CD4-positive, alpha-beta T cell (primary cell): ENCODE measurements at regions of chr16 and their contacts with region 1.

Region 1: DNA sequence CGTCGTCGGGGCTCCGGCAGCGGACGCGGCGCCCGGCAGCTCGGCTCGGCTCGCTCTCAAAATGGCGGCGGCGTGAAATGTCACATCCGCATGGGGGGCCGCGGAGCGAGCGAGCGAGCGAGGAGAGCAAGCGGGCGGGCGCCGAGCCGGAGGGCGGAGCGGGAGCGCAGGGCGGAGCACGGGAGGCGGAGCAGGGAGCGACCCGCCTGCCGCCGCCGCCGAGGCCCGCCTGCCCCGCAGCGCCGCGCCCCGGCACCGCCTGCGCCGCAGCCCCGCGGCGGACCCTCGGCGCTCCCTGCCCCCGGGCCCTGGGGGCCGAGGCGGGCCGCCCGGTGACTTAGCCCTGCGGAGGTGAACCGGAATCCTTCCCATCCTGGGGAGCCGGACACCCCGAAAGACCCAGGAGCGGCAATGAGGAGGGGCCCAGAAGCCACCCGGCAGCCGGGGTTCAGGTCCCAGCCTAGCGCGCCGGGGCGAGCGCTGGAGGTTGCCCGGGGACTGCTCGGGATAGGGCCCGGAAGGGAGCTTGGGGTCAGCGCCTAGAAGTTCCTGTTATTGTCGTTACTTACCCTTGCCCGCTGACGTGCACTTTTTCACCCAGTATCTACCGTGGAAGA is at the start of gene USP7:
- DNase-seq: peak; percentile 85 to 97 (median 91)
- ATAC-seq: peak; percentile 88
- H3K4me3 ChIP-seq: peak within 1 kb of the TSS; percentile 75
- H3K4me3 Mint-ChIP-seq: peak within 1 kb of the TSS; percentile 97
- H3K27ac ChIP-seq: peak within 1 kb of the TSS; percentile 64 to 81
- H3K27ac Mint-ChIP-seq: peak within 1 kb of the TSS; percentile 94
- H3K4me1 ChIP-seq: peaks cover 42% of the 10 kb centered on the region
- H3K4me1 Mint-ChIP-seq: peaks cover 47% of the 10 kb centered on the region
- H3K27me3 ChIP-seq: no peaks in the 10 kb centered on the region
- H3K27me3 Mint-ChIP-seq: no peaks in the 10 kb centered on the region
- CTCF ChIP-seq: no peak
- total RNA-seq, gene USP7: 259 to 268 TPM

Region 2: DNA sequence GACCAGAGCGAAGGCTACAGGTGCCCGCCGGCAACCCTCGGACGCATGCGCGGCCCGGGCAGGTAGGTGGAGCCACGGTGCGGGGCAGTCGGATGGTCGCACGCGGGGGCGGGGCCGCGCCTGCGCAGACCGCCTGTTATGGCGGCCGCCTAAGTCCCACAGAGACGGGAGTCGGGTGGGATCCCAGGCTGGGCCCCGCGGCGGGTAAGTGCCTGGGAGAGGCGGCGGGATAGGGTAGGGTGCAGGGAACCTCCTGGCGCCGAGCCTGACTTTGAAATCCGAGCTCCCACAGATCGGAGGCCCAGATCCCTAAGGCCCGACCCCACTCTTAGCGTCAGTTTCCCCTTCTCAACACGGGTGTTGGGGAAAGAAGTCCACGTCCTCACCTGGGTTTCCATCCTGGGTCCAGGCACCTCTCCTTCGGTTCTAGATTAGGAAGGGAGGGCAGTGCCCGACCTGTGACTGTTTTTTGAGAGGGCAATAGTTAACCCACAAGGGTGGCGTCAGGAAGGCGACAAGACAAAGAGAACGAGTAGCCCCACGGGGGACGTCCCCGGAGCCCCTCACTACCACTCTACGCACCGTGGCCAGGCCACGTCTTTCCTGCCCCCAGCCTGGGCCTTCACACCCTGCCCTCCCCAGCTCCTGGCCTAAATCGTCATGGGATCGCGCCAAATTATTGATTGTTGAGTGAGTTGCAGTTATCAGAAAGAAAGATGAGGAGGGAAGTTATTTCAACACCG is 342.2 kb before region 1 on chr16 and contains the start of gene METTL22:
- CTCF ChIA-PET with region 1: no interaction called
- POLR2A ChIA-PET with region 1: no interaction called
- intact Hi-C with region 1: loop called in 1 of 2 experiments (anchors 2 kb)
- DNase-seq: peak; percentile 83 to 97 (median 90)
- ATAC-seq: peak; percentile 98
- H3K4me3 ChIP-seq: peak within 1 kb of the TSS; percentile 100
- H3K4me3 Mint-ChIP-seq: peak within 1 kb of the TSS; percentile 94
- H3K27ac ChIP-seq: peak within 1 kb of the TSS; percentile 33 to 72
- H3K27ac Mint-ChIP-seq: peak within 1 kb of the TSS; percentile 84
- H3K4me1 ChIP-seq: peaks cover 20% of the 10 kb centered on the region
- H3K4me1 Mint-ChIP-seq: peaks cover 22% of the 10 kb centered on the region
- H3K27me3 ChIP-seq: no peaks in the 10 kb centered on the region
- H3K27me3 Mint-ChIP-seq: peaks cover 10% of the 10 kb centered on the region
- CTCF ChIP-seq: no peak
- total RNA-seq, gene METTL22: 23.2 to 26.5 TPM

Region 3: DNA sequence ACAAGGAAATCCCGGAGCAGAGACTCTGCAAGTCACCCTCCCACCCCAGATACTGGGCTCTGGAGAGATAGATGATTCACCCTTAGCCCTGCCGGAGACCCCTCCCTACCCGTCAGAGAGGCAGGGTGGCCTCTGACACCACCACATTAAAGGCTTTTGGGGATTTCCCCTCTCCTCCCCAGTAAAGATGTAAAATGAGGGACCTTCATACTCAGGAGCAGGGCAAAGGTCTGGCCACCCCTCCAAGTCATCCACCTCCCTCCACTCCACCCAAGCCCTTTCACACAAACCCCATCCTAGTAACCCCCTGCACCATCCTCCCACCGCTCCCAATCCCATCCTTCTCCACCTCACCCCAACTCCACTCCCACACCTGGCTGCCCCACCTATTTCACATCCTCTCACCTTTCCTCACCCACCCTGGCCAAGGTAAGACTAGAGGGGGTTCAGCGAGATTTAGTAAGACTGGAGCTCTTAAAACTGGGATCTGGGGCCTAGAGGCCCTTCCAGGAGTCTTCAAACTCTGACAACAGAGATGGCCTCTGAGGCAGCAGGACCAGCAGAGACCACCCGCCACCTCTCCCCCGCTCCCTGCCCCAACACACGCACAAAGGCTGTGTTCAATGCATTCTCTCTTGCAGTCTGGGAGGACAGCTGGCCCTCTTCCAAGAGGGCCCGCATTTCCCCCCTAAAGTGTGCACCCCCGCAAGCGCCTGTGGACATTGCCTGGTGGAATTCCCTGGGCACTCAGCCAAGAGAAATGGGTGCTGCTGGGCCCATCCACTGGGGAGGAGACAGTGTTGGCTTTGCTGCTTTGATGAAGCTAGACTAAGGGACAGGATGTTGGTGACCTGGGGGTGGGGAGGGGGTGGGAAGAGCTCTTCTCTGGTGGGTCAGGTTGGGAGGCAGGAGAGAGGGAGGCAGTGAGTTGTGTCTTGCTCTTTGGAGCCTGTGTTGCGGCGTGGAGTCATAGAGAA is 288.5 kb before region 1 on chr16:
- CTCF ChIA-PET with region 1: no interaction called
- POLR2A ChIA-PET with region 1: no interaction called
- intact Hi-C with region 1: no loop called
- DNase-seq: peak; percentile 14 to 86 (median 36)
- ATAC-seq: peak; percentile 33
- H3K4me3 ChIP-seq: peak overlapping the region; percentile 92
- H3K4me3 Mint-ChIP-seq: peak overlapping the region; percentile 97
- H3K27ac ChIP-seq: no peak overlapping the region
- H3K27ac Mint-ChIP-seq: peak overlapping the region; percentile 91
- H3K4me1 ChIP-seq: peaks cover 25% of the 10 kb centered on the region
- H3K4me1 Mint-ChIP-seq: peaks cover 24% of the 10 kb centered on the region
- H3K27me3 ChIP-seq: no peaks in the 10 kb centered on the region
- H3K27me3 Mint-ChIP-seq: no peaks in the 10 kb centered on the region
- CTCF ChIP-seq: no peak

Region 4: DNA sequence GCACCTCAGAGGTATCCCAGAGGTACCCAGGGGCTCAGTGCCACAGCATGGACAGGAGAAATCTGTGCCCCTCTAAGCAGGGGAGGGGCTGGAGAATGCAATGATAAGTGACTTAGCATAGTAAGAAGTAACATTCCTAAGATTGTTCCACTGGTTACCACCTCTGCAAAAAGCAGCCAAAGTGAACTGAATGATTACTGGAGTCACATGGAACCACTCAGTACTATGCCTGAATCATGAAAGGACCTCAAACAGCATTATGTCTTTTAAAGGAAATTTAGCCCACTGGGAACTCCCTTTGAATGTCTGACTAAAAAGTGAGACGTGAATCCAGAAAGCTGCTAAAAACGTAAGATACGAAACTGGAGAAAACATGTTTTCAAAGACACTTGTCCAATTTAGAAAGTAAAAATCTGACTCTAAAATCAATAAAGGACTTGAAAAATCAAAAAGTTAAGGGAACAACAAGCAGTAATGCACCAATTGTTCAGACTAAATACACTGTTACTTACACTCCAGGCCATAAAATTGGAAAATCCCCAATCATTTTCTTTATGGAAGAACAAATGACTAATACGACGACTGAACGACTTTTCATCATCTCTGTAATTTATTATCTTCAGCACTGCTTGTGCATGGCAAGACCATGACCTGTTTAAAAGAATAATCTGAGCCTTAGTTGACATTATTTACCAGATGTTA is 43.1 kb before region 1 on chr16:
- CTCF ChIA-PET with region 1: no interaction called
- POLR2A ChIA-PET with region 1: no interaction called
- intact Hi-C with region 1: loop called (anchors 5 kb)
- DNase-seq: no peak
- ATAC-seq: no peak
- H3K4me3 ChIP-seq: no peak overlapping the region
- H3K4me3 Mint-ChIP-seq: no peak overlapping the region
- H3K27ac ChIP-seq: no peak overlapping the region
- H3K27ac Mint-ChIP-seq: peak overlapping the region; percentile 75
- H3K4me1 ChIP-seq: peaks cover 24% of the 10 kb centered on the region
- H3K4me1 Mint-ChIP-seq: peaks cover 38% of the 10 kb centered on the region
- H3K27me3 ChIP-seq: no peaks in the 10 kb centered on the region
- H3K27me3 Mint-ChIP-seq: no peaks in the 10 kb centered on the region
- CTCF ChIP-seq: no peak

Region 5: DNA sequence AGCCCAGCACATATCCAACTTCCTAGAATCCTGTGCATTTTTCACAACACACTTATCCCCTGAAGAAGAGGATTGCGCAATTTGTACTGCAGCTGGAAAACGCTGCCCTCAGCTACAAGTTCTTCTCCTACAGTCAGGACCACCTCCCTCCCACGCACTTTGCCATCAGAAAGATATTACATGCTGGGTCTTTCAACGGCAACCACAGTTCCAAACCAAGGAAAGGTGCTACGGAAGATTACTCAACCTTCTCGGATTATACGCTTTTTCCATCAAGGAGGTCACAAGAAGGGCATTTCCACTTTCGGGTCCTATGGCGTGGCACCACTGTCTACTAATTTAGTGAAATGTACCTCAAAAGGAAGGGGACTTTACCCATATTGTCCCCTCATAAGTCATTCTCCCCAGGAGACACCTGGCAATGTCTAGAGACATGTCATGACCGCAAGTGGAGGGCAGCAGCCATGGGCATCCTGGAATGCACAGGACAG is 35.4 kb before region 1 on chr16:
- CTCF ChIA-PET with region 1: no interaction called
- POLR2A ChIA-PET with region 1: no interaction called
- intact Hi-C with region 1: loop called in 1 of 2 experiments (anchors 5 kb)
- DNase-seq: no peak
- ATAC-seq: no peak
- H3K4me3 ChIP-seq: no peak overlapping the region
- H3K4me3 Mint-ChIP-seq: no peak overlapping the region
- H3K27ac ChIP-seq: no peak overlapping the region
- H3K27ac Mint-ChIP-seq: no peak overlapping the region
- H3K4me1 ChIP-seq: peaks cover 17% of the 10 kb centered on the region
- H3K4me1 Mint-ChIP-seq: peaks cover 55% of the 10 kb centered on the region
- H3K27me3 ChIP-seq: no peaks in the 10 kb centered on the region
- H3K27me3 Mint-ChIP-seq: no peaks in the 10 kb centered on the region
- CTCF ChIP-seq: no peak

Region 6: DNA sequence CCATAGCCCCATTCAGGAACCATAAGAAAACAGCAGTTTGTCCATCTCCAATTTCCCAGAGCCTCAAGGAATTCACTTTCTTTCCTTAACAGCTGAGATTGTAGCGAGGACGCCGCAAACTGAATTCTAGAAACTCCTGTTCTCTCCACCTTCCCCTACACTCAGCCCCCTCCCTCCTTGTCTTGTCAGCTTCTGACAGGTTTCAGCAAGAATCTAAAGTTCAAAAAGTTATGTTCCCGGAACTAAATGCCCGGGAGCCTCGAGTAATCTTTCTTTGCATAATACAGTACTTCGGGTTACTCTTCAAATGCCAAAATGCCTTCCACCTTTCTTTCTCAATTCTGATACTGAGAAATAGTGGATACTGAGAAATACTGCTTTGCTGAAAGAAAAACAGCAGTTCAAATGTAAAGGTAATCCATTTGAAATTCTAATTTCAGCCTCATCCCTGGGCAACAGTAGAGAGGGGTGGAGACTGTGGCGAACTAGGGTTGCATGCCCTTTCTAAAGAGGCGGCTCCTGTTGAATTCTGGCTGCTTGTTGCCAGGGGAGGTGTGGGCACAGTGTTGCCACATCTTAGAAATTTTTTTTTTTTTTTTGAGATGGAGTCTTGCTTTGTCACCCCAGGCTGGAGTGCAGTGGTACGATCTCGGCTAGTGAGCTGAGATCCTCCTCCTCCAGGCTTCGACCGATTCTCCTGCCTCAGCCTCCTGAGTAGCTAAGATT is 63.3 kb after region 1 on chr16:
- CTCF ChIA-PET with region 1: no interaction called
- POLR2A ChIA-PET with region 1: no interaction called
- intact Hi-C with region 1: no loop called
- DNase-seq: no peak
- ATAC-seq: no peak
- H3K4me3 ChIP-seq: no peak overlapping the region
- H3K4me3 Mint-ChIP-seq: no peak overlapping the region
- H3K27ac ChIP-seq: no peak overlapping the region
- H3K27ac Mint-ChIP-seq: no peak overlapping the region
- H3K4me1 ChIP-seq: no peaks in the 10 kb centered on the region
- H3K4me1 Mint-ChIP-seq: no peaks in the 10 kb centered on the region
- H3K27me3 ChIP-seq: no peaks in the 10 kb centered on the region
- H3K27me3 Mint-ChIP-seq: no peaks in the 10 kb centered on the region
- CTCF ChIP-seq: no peak